CD8-positive, alpha-beta T cell (primary cell): ENCODE measurements at regions of chr11 and their contacts with region 1.

Region 1: DNA sequence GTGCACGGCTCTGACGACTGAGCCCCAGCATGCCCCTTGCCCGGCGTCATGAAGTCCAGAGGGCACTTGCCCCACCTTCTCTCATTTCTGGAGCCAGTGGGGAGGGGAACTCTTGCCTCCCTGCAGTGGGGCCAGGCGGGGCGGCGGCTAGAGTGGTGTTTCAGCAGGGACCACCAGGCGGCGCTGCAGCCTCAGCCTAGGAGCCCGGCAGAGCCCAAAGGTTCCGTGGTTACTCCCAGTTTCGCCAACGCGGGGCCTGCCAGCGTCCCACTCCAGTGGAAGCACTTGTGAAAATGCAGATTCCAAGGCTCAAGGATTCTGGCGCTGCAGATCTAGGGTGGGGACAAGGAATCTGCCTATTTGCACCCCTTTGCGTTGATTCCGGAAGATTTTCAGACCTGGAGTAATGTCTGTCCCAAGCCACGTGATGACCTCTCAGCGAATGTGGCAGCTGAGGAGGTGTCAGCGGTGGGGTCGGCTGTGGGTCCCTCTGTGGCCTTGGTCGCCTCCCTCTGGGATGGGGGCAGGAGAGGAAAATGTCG is 55.7 kb downstream of the CD82 start:
- DNase-seq: peak; percentile 26 to 69 (median 51)
- ATAC-seq: peak; percentile 60
- H3K4me3 ChIP-seq: no peak overlapping the region
- H3K4me3 Mint-ChIP-seq: no peak overlapping the region
- H3K27ac ChIP-seq: no peak overlapping the region
- H3K27ac Mint-ChIP-seq: no peak overlapping the region
- H3K4me1 ChIP-seq: peaks cover 18% of the 10 kb centered on the region
- H3K4me1 Mint-ChIP-seq: peaks cover 15% of the 10 kb centered on the region
- H3K27me3 ChIP-seq: no peaks in the 10 kb centered on the region
- H3K27me3 Mint-ChIP-seq: no peaks in the 10 kb centered on the region
- CTCF ChIP-seq: peak; percentile 56

Region 2: DNA sequence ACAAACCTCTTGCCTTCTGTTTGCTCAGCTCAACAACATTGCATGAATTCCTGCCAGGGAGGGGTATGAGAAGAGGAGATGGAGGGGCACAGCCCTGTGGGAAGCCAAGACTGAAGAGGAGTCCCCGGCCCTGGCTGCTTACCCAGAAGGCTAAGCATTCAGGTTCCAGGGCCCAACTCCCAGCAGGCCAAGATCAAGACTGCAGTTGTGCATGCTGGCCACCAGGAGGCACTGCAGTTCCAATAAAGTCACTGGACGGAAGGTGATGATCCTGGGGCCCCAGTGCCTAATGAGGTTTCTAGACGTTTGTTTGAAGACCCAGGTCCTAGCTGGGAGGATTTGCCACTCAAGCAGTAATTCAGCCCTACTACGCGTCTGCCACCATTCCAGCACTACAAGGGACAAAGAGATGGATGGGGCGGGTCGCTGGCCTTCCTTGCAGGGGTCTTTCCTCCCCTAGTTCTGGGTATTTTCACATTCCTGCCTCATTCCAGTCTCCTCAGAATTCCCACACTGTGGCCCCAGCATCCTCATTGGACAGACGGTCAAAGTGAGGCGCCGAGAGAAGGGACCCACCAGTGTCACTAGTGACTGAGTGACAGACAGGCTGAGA is 334.8 kb before region 1 on chr11:
- CTCF ChIA-PET with region 1: no interaction called
- POLR2A ChIA-PET with region 1: no interaction called
- intact Hi-C with region 1: loop called in 1 of 2 experiments (anchors 5 kb)
- DNase-seq: peak; percentile 8 to 65 (median 52)
- ATAC-seq: peak; percentile 52
- H3K4me3 ChIP-seq: no peak overlapping the region
- H3K4me3 Mint-ChIP-seq: no peak overlapping the region
- H3K27ac ChIP-seq: no peak overlapping the region
- H3K27ac Mint-ChIP-seq: no peak overlapping the region
- H3K4me1 ChIP-seq: no peaks in the 10 kb centered on the region
- H3K4me1 Mint-ChIP-seq: no peaks in the 10 kb centered on the region
- H3K27me3 ChIP-seq: no peaks in the 10 kb centered on the region
- H3K27me3 Mint-ChIP-seq: no peaks in the 10 kb centered on the region
- CTCF ChIP-seq: peak; percentile 93

Region 3: DNA sequence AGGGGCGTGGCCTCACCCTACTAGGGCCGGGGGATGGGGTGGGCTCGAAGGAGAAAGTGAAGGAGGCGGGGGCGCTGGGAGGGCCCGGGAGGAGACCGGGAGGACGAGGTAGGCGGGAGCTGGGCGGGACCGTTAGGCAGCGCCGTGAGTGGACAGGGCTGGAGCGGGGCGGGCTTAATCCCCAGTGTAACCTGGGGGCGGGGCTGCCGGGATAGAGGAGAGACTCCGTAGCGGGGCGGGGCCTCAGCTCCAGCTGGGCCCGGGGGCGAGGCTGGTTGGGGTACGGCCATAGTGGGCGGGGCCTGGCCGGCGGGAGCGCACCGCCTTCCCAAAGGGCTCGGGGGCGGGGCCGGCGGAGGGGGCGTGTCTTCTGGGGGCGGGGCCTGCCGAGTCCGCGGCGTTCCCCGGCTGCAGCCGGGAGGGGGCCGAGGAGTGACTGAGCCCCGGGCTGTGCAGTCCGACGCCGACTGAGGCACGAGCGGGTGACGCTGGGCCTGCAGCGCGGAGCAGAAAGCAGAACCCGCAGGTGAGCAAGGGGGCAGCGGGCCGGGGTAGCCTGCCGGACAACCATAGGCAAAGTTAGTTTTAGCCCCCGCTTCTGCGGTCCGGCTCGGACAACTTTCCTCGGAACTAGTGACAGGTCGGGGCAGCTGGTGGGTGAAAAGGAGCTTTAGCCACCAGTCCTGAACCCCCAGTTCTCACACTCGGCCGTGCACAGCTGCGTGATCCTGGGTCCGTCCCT is 55.8 kb before region 1 on chr11 and contains the start of gene CD82:
- CTCF ChIA-PET with region 1: interaction called, 625 read pairs
- POLR2A ChIA-PET with region 1: interaction called, 6 read pairs
- intact Hi-C with region 1: no loop called
- DNase-seq: peak; percentile 88 to 98 (median 95)
- ATAC-seq: peak; percentile 73
- H3K4me3 ChIP-seq: peak within 1 kb of the TSS; percentile 86 to 89
- H3K4me3 Mint-ChIP-seq: peak within 1 kb of the TSS; percentile 82
- H3K27ac ChIP-seq: peak within 1 kb of the TSS; percentile 33 to 71
- H3K27ac Mint-ChIP-seq: peak within 1 kb of the TSS; percentile 82
- H3K4me1 ChIP-seq: peaks cover 47% of the 10 kb centered on the region
- H3K4me1 Mint-ChIP-seq: peaks cover 53% of the 10 kb centered on the region
- H3K27me3 ChIP-seq: no peaks in the 10 kb centered on the region
- H3K27me3 Mint-ChIP-seq: no peaks in the 10 kb centered on the region
- CTCF ChIP-seq: peak; percentile 39
- total RNA-seq, gene CD82: 28.1 to 32.4 TPM

Region 4: GRCh38 chr11:44578279-44578678 is 42.9 kb before region 1 on chr11:
- CTCF ChIA-PET with region 1: interaction called, 15 read pairs
- POLR2A ChIA-PET with region 1: no interaction called
- intact Hi-C with region 1: no loop called
- DNase-seq: no peak
- ATAC-seq: no peak
- H3K4me3 ChIP-seq: no peak overlapping the region
- H3K4me3 Mint-ChIP-seq: no peak overlapping the region
- H3K27ac ChIP-seq: no peak overlapping the region
- H3K27ac Mint-ChIP-seq: peak overlapping the region; percentile 3
- H3K4me1 ChIP-seq: peaks cover 34% of the 10 kb centered on the region
- H3K4me1 Mint-ChIP-seq: peaks cover 45% of the 10 kb centered on the region
- H3K27me3 ChIP-seq: no peaks in the 10 kb centered on the region
- H3K27me3 Mint-ChIP-seq: no peaks in the 10 kb centered on the region
- CTCF ChIP-seq: no peak

Region 5: GRCh38 chr11:44604171-44604581 is 17.0 kb before region 1 on chr11:
- CTCF ChIA-PET with region 1: interaction called, 13 read pairs
- POLR2A ChIA-PET with region 1: no interaction called
- intact Hi-C with region 1: no loop called
- DNase-seq: no peak
- ATAC-seq: no peak
- H3K4me3 ChIP-seq: no peak overlapping the region
- H3K4me3 Mint-ChIP-seq: no peak overlapping the region
- H3K27ac ChIP-seq: no peak overlapping the region
- H3K27ac Mint-ChIP-seq: peak overlapping the region; percentile 43
- H3K4me1 ChIP-seq: peaks cover 9% of the 10 kb centered on the region
- H3K4me1 Mint-ChIP-seq: peaks cover 19% of the 10 kb centered on the region
- H3K27me3 ChIP-seq: no peaks in the 10 kb centered on the region
- H3K27me3 Mint-ChIP-seq: no peaks in the 10 kb centered on the region
- CTCF ChIP-seq: no peak

Region 6: GRCh38 chr11:44842220-44842619 is 221.0 kb after region 1 on chr11:
- CTCF ChIA-PET with region 1: no interaction called
- POLR2A ChIA-PET with region 1: no interaction called
- intact Hi-C with region 1: no loop called
- DNase-seq: no peak
- ATAC-seq: no peak
- H3K4me3 ChIP-seq: no peak overlapping the region
- H3K4me3 Mint-ChIP-seq: no peak overlapping the region
- H3K27ac ChIP-seq: no peak overlapping the region
- H3K27ac Mint-ChIP-seq: no peak overlapping the region
- H3K4me1 ChIP-seq: no peaks in the 10 kb centered on the region
- H3K4me1 Mint-ChIP-seq: no peaks in the 10 kb centered on the region
- H3K27me3 ChIP-seq: no peaks in the 10 kb centered on the region
- H3K27me3 Mint-ChIP-seq: peaks cover 2% of the 10 kb centered on the region
- CTCF ChIP-seq: no peak

Region 7: GRCh38 chr11:44893846-44894617 is 272.8 kb after region 1 on chr11:
- CTCF ChIA-PET with region 1: interaction called, 4 read pairs
- POLR2A ChIA-PET with region 1: no interaction called
- intact Hi-C with region 1: loop called in 1 of 2 experiments (anchors 1 kb)
- DNase-seq: peak in 8 of 9 experiments; percentile 48 to 72 (median 60)
- ATAC-seq: peak; percentile 55
- H3K4me3 ChIP-seq: no peak overlapping the region
- H3K4me3 Mint-ChIP-seq: no peak overlapping the region
- H3K27ac ChIP-seq: no peak overlapping the region
- H3K27ac Mint-ChIP-seq: no peak overlapping the region
- H3K4me1 ChIP-seq: no peaks in the 10 kb centered on the region
- H3K4me1 Mint-ChIP-seq: no peaks in the 10 kb centered on the region
- H3K27me3 ChIP-seq: no peaks in the 10 kb centered on the region
- H3K27me3 Mint-ChIP-seq: no peaks in the 10 kb centered on the region
- CTCF ChIP-seq: peak; percentile 54